Activated B cell treated with CpG ODN at 0.5 μM for 24 hours (primary cell): ENCODE measurements at regions of chr16 and their contacts with region 1.

Region 1: DNA sequence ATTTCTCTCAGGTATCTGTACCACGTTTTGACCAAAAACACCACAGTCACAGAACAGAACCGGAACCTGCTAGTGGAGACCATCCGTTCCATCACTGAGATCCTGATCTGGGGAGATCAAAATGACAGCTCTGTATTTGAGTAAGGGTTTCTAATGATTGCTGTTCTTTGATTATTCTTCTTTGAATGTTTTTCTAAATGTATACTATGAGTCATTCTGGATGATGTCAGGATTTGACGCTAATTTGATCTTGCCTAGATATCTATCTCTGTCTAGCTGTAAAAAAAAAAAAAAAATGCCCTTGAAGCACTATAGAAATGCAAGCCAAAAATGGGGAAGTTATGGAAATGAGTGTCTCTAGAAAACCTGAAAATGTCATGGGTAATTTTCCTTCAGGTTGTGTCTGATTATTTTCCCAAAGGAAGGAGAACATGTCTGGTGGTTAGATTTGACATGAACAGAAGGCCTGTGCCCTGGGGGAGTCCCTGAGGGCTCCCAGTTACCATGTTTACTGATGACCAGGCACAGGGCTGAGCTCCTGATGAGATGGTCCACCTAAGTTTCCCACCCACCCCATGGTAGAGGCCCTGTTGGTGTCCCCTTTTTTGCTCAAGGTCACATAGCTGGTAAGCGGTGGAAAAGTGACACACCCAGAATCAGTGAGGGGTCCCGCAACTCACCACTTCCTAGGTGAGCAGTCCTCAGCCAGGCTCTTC is 13.6 kb downstream of the CLEC16A start:
- DNase-seq: no peak
- ATAC-seq: peak; percentile 61
- H3K4me3 Mint-ChIP-seq: peak overlapping the region; percentile 42
- H3K27ac Mint-ChIP-seq: peak overlapping the region; percentile 59
- H3K4me1 Mint-ChIP-seq: peaks cover 67% of the 10 kb centered on the region
- H3K27me3 Mint-ChIP-seq: no peaks in the 10 kb centered on the region
- CTCF ChIP-seq: no peak

Region 2: DNA sequence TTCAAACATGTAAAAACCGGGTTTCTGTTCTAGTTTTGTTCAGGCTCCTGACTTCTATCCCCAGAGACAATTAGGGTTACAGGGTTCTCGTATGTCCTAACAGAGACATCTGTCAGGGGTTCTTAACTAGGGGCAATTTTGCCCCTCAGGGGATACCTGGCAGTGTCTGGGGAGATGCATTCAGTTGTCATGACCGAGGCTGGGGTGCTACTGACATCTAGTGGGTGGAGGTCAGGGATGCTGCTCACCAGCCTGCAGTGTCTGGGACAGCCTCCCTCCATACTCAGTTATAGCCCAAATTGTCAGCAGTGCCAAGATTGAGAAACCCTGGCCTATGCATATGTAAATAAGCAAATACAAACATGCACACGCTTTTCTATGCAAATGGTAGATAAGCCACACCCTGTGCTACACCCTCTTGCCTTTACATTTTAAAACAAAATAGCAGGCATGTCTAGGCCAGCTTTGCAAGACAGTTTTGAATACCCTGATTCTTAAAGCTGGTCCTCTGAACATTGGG is 23.8 kb after region 1 on chr16:
- CTCF ChIA-PET with region 1: interaction called, 3 read pairs
- POLR2A ChIA-PET with region 1: no interaction called
- intact Hi-C with region 1: loop called (anchors 1 kb)
- DNase-seq: peak; percentile 64
- ATAC-seq: peak; percentile 88
- H3K4me3 Mint-ChIP-seq: peak overlapping the region; percentile 69
- H3K27ac Mint-ChIP-seq: peak overlapping the region; percentile 84
- H3K4me1 Mint-ChIP-seq: peaks cover 49% of the 10 kb centered on the region
- H3K27me3 Mint-ChIP-seq: no peaks in the 10 kb centered on the region
- CTCF ChIP-seq: no peak

Region 3: DNA sequence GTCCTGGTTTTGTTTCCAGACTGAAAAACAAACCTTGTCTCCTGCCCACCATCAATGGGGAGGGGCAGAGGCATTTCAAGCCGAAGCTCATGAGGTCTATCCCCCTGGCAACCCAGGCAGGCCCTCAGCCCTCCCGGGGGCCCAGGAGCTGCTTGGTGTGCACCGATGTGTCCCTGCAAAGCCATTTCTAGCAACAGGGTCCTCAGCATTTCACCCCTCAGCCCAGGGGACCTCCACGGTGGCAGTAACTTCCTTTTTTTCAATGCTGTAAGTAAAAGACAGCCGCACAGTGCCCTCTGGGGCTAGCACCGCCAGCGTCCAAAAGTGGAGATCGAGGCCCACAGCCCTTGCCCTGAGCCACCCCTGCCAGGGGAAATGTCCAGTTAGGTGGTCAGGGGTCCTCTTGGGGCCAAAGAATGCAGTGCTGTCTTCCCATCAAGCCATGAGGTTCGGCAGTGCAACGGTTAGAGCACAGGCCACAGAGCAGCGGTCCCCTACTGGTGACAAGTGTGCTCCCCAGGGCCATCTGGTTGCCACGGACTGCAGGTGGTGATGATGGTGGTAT is 548.9 kb after region 1 on chr16:
- CTCF ChIA-PET with region 1: no interaction called
- POLR2A ChIA-PET with region 1: no interaction called
- intact Hi-C with region 1: loop called (anchors 2 kb)
- DNase-seq: peak; percentile 48
- ATAC-seq: peak; percentile 87
- H3K4me3 Mint-ChIP-seq: peak overlapping the region; percentile 76
- H3K27ac Mint-ChIP-seq: peak overlapping the region; percentile 74
- H3K4me1 Mint-ChIP-seq: peaks cover 13% of the 10 kb centered on the region
- H3K27me3 Mint-ChIP-seq: no peaks in the 10 kb centered on the region
- CTCF ChIP-seq: no peak

Region 4: GRCh38 chr16:11535471-11535870 is 577.5 kb after region 1 on chr16:
- CTCF ChIA-PET with region 1: interaction called, 19 read pairs
- POLR2A ChIA-PET with region 1: no interaction called
- intact Hi-C with region 1: loop called (anchors 1 kb)
- DNase-seq: no peak
- ATAC-seq: no peak
- H3K4me3 Mint-ChIP-seq: no peak overlapping the region
- H3K27ac Mint-ChIP-seq: no peak overlapping the region
- H3K4me1 Mint-ChIP-seq: no peaks in the 10 kb centered on the region
- H3K27me3 Mint-ChIP-seq: no peaks in the 10 kb centered on the region
- CTCF ChIP-seq: no peak

Region 5: GRCh38 chr16:11639925-11640899 is 682.3 kb after region 1 on chr16:
- CTCF ChIA-PET with region 1: no interaction called
- POLR2A ChIA-PET with region 1: interaction called, 4 read pairs
- intact Hi-C with region 1: loop called (anchors 2 kb)
- DNase-seq: no peak
- ATAC-seq: no peak
- H3K4me3 Mint-ChIP-seq: no peak overlapping the region
- H3K27ac Mint-ChIP-seq: no peak overlapping the region
- H3K4me1 Mint-ChIP-seq: peaks cover 8% of the 10 kb centered on the region
- H3K27me3 Mint-ChIP-seq: no peaks in the 10 kb centered on the region
- CTCF ChIP-seq: no peak